ENCODE measurements at regions of chr20 and their contacts with region 1.

Region 1: DNA sequence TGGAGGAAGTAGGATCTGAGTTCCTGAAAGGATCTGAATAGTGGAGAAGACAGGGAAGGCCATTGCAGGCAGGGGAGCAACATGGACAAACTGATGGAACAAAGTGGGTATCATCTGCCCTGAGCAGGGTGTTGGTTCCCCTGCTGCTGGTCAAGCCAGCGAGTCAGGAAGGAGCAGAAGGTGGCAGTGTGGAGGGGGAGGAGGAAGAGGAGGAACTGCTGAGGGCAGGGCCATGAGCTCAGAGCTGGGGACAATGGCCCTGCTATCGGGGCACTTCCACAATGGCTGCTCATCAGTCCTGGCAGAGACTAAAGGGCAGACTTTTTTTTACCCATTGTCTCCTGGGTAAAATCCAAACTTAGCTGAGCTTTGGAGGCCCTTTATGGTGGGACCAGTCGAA is 13.6 kb downstream of the CNBD2 start:
- DNase-seq: peak in 1 of 7 donors; percentile 30
- H3K4me3 ChIP-seq: no peak overlapping the region
- H3K27ac ChIP-seq: no peak overlapping the region
- H3K4me1 ChIP-seq: no peaks in the 10 kb centered on the region
- H3K27me3 ChIP-seq: no peaks in the 10 kb centered on the region
- CTCF ChIP-seq: no peak
- POLR2A ChIP-seq: no peak

Region 2: GRCh38 chr20:35866418-35867197 is 115.4 kb before region 1 on chr20:
- intact Hi-C with region 1: no loop called
- DNase-seq: no peak
- H3K4me3 ChIP-seq: no peak overlapping the region
- H3K27ac ChIP-seq: no peak overlapping the region
- H3K4me1 ChIP-seq: peaks cover 7 to 22% of the 10 kb centered on the region in 2 donors
- H3K27me3 ChIP-seq: no peaks in the 10 kb centered on the region
- CTCF ChIP-seq: no peak
- POLR2A ChIP-seq: no peak

Region 3: DNA sequence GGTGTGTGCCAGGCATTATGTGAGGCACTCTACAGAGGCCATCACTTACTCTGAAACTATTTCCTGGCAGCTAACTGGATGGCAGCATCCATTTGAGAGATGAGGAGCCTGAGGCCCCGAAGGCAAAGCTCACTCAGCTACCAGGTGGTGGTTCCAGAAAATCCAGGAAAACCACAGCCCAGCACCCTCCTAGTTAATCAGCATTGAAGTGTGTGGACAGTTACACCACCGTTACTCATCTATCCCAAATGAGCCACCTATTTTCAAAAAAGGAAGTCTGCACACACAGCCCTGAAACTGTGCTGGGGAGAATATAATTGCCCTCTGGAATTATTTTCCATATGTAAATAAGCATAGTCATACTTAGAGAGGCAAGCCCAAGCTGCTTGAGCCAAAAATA is 53.8 kb after region 1 on chr20:
- intact Hi-C with region 1: no loop called
- DNase-seq: no peak
- H3K4me3 ChIP-seq: no peak overlapping the region
- H3K27ac ChIP-seq: no peak overlapping the region
- H3K4me1 ChIP-seq: peaks cover 0 to 5% of the 10 kb centered on the region in 2 donors
- H3K27me3 ChIP-seq: no peaks in the 10 kb centered on the region
- CTCF ChIP-seq: no peak
- POLR2A ChIP-seq: no peak

Region 4: GRCh38 chr20:36408219-36408618 is 426.2 kb after region 1 on chr20:
- intact Hi-C with region 1: no loop called
- DNase-seq: peak in 4 of 7 donors; percentile 40 to 84 (median 42)
- H3K4me3 ChIP-seq: no peak overlapping the region
- H3K27ac ChIP-seq: no peak overlapping the region
- H3K4me1 ChIP-seq: no peaks in the 10 kb centered on the region
- H3K27me3 ChIP-seq: no peaks in the 10 kb centered on the region
- CTCF ChIP-seq: no peak
- POLR2A ChIP-seq: no peak

Region 5: GRCh38 chr20:36447101-36447500 is 465.1 kb after region 1 on chr20:
- intact Hi-C with region 1: loop called in 1 of 2 experiments (anchors 10 kb)
- DNase-seq: no peak
- H3K4me3 ChIP-seq: no peak overlapping the region
- H3K27ac ChIP-seq: no peak overlapping the region
- H3K4me1 ChIP-seq: no peaks in the 10 kb centered on the region
- H3K27me3 ChIP-seq: no peaks in the 10 kb centered on the region
- CTCF ChIP-seq: no peak
- POLR2A ChIP-seq: no peak

Region 6: DNA sequence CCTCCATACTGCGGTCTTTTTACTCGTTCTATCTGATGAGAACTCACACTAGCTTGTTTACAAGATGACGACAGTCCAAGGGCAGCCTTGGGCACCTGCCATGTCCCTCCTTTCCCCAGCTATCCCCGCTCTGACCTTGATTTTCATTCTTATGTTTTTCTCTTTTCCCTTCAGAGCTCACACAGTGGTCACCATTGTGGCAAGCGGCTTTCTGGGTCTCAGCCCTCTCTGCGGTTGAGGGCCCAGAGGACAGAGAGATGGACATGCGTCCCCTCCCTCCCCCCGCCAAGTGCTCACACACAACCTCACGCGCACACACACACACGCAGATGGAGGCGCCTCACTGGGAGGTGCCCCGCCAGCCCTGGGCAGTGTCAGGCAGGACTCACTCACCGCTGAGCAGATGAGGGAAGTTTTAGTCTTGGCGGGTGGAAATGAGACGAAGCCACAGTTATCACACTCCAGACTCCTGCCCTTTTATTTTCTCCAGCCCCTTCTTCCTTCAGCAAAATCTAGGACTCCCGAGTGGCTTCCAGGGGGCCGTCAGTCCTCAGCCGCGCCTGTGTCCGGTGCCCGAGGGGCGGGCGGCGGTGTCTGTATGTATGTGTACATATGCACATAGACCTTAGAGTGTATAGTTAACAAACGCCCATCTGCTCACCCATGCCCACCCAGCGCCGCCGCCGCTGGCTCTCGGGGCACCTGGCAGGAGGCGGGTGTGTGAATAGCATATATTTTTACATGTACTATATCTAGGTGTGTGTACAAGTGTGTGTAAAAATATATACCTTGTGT is 545.6 kb after region 1 on chr20:
- intact Hi-C with region 1: no loop called
- DNase-seq: peak; percentile 83 to 94 (median 90)
- H3K4me3 ChIP-seq: no peak overlapping the region
- H3K27ac ChIP-seq: peak overlapping the region; percentile 80 to 94 (median 86)
- H3K4me1 ChIP-seq: peaks cover 15 to 26% of the 10 kb centered on the region in 2 donors
- H3K27me3 ChIP-seq: no peaks in the 10 kb centered on the region
- CTCF ChIP-seq: no peak
- POLR2A ChIP-seq: peak in 1 of 2 donors; percentile 77